Tibial artery (tissue), 4 donors: ENCODE measurements at regions of chr4 and their contacts with region 1.

Region 1: DNA sequence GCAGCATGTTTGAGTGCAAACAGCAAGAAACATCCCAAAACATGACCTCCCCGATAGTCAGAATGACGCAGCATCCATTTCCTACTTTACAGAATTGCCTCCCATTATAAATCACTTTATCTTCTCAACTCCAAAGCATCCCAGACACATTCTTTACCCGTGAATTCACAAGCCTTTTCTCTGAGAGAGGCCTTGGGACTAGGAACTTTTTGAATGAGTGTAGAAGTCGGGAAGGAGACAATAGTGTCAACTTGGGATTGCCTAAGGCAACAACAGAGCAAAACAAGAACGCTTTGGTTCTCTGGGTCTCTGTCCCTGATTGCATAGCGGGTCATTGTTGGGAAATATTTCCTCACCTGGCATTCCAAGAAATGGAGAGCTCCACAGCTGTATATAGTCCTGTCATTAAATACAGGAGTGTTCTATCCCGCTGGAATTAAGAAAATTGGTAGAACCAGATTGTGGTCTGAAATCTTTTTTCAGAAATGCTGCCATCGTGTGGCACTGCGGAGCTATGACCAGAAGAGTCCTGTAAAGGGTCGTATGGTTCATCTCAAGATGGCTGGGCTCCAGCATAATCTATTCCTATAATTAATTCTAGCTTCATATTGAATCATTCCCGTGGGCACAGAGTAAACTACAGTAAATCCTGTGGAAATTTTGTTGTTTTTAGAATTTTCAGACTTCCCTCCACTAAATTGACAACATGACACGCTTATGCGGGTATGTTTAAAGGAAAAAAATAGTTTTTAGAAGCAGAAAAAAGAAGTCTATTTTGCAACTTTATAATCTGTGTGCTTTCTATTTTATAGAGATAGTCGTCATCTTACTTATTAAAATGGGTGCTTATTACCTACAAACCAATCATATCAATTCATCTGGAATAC is 2.0 kb upstream of the SPP1 start:
- DNase-seq: peak; percentile 51 to 68
- H3K4me3 ChIP-seq: peak overlapping the region in 1 of 2 donors; percentile 3
- H3K27ac ChIP-seq: no peak overlapping the region
- H3K4me1 ChIP-seq: peaks cover 0 to 3% (median 0%) of the 10 kb centered on the region in 4 donors
- H3K27me3 ChIP-seq: no peaks in the 10 kb centered on the region
- CTCF ChIP-seq: peak; percentile 68 to 76

Region 2: DNA sequence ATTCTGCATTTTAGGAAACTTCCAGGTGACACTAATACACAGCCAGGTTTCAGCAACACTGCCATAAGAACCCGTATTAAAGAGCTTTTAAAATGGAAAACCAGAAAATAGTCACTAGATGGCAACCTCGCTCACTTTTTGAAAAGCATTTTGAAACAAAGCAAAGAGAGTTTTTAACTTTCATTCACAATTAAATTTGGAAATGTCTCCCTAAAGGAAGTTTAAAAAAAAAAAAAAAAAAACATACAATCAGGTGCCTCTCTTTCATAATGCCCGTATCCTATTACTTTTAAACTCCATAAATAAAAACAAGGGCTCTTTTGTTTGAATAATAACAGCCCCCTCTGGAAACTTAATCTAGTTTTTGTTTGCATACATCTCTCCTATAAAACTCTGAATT is 120.4 kb before region 1 on chr4:
- intact Hi-C with region 1: loop called (anchors 5 kb)
- DNase-seq: no peak
- H3K4me3 ChIP-seq: no peak overlapping the region
- H3K27ac ChIP-seq: no peak overlapping the region
- H3K4me1 ChIP-seq: no peaks in the 10 kb centered on the region
- H3K27me3 ChIP-seq: no peaks in the 10 kb centered on the region
- CTCF ChIP-seq: peak; percentile 46 to 65

Region 3: DNA sequence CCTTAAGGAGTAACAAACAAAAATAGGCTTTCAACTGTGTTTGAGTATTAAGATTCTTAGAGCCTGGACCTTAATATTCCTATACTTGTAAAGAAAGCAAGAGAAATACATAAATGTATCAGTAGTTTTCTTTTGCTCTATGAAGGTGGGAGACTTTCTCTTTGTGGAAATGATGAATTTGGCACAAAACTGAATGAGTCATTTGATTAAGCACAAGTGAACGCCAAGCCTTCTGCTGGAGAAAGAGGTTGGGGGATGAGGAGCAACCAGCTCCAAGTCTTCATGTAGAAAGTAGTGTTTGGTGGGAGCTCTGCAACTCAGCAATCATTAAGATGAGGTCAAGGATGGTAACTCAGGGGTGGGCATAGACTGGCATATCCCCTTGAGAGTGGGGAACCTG is 91.2 kb before region 1 on chr4:
- intact Hi-C with region 1: no loop called
- DNase-seq: no peak
- H3K4me3 ChIP-seq: no peak overlapping the region
- H3K27ac ChIP-seq: no peak overlapping the region
- H3K4me1 ChIP-seq: no peaks in the 10 kb centered on the region
- H3K27me3 ChIP-seq: no peaks in the 10 kb centered on the region
- CTCF ChIP-seq: no peak

Region 4: GRCh38 chr4:87916626-87917025 is 56.9 kb before region 1 on chr4:
- intact Hi-C with region 1: no loop called
- DNase-seq: no peak
- H3K4me3 ChIP-seq: no peak overlapping the region
- H3K27ac ChIP-seq: no peak overlapping the region
- H3K4me1 ChIP-seq: peaks cover 0 to 2% (median 0%) of the 10 kb centered on the region in 4 donors
- H3K27me3 ChIP-seq: no peaks in the 10 kb centered on the region
- CTCF ChIP-seq: no peak